ENCODE measurements at regions of chr17 and their contacts with region 1.

Region 1: DNA sequence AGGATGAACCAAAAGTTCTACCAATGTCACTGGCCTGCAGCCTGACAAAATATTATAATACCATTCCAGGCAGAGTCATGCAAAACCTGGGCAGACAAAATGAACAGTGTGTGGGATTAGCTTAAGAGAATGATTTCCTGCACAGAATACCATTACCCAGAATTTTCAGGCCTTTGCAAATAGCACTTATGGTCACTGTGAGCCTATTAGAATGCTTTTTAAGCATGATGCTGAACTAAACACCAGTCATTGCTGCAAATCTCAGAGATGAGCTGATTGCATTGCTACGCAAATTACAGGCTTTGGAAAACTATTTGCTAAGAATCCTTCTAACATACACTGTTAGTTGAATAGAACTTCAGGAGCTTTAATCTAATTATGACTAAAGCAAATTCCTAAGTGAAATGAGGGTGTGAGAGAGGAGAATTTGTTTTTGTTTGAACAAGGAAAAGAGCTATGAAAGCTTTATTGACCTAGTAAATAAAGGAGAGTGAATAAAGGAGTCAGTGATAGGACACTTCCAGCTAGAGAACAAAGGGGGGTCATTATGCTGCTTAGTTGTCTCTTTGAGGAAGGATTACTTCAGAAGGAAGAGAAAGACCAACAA is 398.8 kb downstream of the HS3ST3B1 start:
- ATAC-seq: peak in 5 of 8 experiments; percentile 19 to 92 (median 69)
- H3K4me3 ChIP-seq: no peak overlapping the region
- H3K27ac ChIP-seq: no peak overlapping the region
- H3K4me1 ChIP-seq: peaks cover 4 to 6% of the 10 kb centered on the region in 2 donors

Region 2: DNA sequence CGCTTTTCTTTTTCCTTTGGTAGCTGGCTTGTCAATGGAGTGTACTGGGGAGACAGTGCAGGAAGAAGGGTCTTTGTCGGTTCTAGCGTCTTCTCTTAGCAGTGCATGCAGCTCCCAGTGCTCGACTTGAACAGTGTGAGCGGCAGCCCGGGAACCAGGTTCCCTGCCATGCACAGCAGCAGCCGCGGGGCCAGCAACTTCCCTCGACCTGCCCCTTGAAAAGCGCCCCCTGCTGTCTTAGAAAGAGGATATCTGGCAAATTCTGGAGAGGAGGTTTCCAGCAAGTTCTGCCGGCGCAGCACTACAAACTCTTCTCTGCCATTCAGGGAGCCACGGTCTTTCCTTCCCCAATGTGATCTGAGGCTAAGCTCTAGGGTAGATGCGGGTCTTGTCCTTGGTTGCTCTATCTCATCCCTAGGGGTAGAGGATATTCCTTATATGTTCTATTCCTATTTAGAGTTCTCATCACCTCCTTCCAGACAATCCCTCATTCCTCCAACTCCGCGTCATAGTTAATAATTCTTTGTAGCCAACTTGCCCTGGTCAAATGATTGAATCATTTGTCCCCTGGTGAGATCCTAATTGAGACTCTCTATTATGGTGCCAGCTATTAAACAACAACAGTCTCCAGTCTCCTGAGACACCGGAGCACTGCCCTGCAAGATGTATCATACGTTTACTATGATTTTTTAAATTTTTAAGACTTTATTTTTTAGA is 114.1 kb after region 1 on chr17:
- in situ Hi-C with region 1: loop called in 1 of 9 experiments (anchors 25 kb)
- ATAC-seq: no peak
- H3K4me3 ChIP-seq: no peak overlapping the region
- H3K27ac ChIP-seq: no peak overlapping the region
- H3K4me1 ChIP-seq: no peaks in the 10 kb centered on the region

Measured in motor neuron (in vitro differentiated cells).